Psoas muscle (tissue), 8 donors: ENCODE measurements at regions of chr10 and their contacts with region 1.

Region 1: DNA sequence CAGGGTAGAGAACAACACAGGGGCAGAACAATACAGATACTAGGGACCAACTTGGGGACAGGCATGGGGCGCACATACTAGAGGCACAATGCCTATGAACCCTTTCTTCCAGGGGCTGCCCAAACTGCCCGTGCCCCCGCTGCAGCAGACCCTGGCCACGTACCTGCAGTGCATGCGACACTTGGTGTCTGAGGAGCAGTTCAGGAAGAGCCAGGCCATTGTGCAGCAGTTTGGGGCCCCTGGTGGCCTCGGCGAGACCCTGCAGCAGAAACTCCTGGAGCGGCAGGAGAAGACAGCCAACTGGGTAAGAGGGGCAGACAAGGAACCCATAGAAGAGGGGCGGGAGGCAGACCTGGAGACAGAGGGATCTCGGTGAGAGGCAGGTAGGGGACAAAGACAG is 5.8 kb downstream of the CHAT start:
- DNase-seq: peak in 1 of 2 donors; percentile 19
- ATAC-seq: no peak
- H3K4me3 ChIP-seq: no peak overlapping the region
- H3K27ac ChIP-seq: no peak overlapping the region
- H3K4me1 ChIP-seq: no peaks in the 10 kb centered on the region
- H3K27me3 ChIP-seq: peaks cover 3 to 42% (median 17%) of the 10 kb centered on the region in 3 donors
- CTCF ChIP-seq: no peak

Region 2: GRCh38 chr10:48533951-48534720 is 1085.5 kb before region 1 on chr10:
- intact Hi-C with region 1: loop called in 1 of 2 experiments (anchors 5 kb)
- DNase-seq: no peak
- ATAC-seq: no peak
- H3K4me3 ChIP-seq: no peak overlapping the region
- H3K27ac ChIP-seq: no peak overlapping the region
- H3K4me1 ChIP-seq: no peaks in the 10 kb centered on the region
- H3K27me3 ChIP-seq: no peaks in the 10 kb centered on the region
- CTCF ChIP-seq: no peak

Region 3: DNA sequence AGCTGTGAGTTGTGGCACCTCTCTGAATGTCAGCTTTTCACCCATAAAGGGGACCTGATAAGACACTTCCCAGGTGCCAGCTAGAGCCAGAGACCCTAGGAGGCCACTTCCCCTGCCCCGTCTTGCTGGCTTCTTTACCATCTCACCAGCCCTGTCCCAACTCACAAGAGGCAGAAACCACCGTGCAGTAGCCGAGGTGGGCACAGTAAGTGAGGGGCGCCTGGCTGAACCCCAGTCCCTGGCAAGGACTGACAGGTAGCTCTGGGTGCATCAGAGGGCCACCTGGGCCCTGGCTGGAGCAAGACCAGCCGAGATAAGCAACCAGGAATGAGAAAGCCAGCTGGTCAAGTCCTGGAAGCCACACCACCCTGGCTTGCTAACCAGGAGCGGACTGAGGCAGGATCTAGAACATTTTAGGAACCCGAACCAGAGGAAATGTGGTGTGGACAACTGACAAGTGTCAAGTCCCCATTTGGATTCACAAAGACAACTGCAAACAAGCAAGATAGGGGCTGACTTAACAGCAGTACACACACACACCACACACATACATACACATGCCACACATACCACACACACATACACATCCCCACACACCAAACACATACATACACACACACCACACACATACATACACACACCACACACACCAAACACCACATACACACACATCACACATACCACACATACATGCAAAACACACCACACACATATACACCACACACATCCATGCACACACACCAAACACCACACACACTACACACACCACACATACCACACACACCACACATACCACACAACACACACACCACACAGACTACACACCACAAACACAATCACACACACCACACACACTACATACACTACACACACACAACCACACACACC is 121.7 kb after region 1 on chr10:
- intact Hi-C with region 1: no loop called
- DNase-seq: no peak
- ATAC-seq: no peak
- H3K4me3 ChIP-seq: no peak overlapping the region
- H3K27ac ChIP-seq: no peak overlapping the region
- H3K4me1 ChIP-seq: no peaks in the 10 kb centered on the region
- H3K27me3 ChIP-seq: no peaks in the 10 kb centered on the region
- CTCF ChIP-seq: no peak